ENCODE measurements at regions of chr10 and their contacts with region 1.

Region 1: DNA sequence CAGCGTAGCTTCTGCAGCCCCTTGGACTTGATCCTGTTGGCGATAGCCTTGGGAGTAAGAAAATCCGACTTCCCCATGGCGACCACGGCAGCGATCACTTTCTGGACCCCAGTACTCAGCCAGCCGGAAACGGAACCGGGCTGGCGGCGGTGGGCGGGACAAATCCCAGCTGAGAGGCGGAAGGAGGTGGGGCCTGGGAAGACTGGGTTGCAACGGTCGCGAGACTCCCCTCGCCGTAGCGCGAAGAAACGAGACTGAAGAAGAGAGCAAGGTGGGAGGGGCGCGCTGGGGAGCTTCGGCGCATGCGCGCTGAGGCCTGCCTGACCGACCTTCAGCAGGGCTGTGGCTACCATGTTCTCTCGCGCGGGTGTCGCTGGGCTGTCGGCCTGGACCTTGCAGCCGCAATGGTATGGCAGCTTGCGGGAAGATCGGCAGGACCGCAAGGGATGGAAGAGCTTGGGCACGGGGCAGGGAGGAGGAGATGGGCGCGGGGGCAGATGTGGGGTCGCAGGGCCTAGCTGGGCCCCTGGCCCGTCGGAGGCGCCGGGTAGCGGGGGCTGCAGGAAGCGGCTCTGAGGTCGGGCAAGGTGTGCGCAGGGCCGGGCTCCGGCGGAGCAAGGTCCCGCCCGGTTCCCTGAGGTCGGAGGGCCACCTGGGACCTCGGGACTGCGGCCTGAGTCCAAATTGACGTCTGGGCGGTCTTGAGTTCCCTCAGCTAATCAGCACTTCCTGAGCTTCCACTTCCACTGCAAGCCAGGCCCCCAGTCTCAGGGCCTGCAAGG is at the starts of genes ATP5F1C and KIN:
- DNase-seq: peak; percentile 93
- ATAC-seq: peak; percentile 97
- H3K4me3 Mint-ChIP-seq: no peak within 1 kb of the TSS
- H3K27ac Mint-ChIP-seq: no peak within 1 kb of the TSS
- H3K4me1 Mint-ChIP-seq: peaks cover 51% of the 10 kb centered on the region
- H3K27me3 Mint-ChIP-seq: no peaks in the 10 kb centered on the region
- CTCF ChIP-seq: no peak
- total RNA-seq, gene ATP5F1C: 177 and 182 TPM in 2 replicates
- total RNA-seq, gene KIN: 12.6 and 13.1 TPM in 2 replicates

Region 2: DNA sequence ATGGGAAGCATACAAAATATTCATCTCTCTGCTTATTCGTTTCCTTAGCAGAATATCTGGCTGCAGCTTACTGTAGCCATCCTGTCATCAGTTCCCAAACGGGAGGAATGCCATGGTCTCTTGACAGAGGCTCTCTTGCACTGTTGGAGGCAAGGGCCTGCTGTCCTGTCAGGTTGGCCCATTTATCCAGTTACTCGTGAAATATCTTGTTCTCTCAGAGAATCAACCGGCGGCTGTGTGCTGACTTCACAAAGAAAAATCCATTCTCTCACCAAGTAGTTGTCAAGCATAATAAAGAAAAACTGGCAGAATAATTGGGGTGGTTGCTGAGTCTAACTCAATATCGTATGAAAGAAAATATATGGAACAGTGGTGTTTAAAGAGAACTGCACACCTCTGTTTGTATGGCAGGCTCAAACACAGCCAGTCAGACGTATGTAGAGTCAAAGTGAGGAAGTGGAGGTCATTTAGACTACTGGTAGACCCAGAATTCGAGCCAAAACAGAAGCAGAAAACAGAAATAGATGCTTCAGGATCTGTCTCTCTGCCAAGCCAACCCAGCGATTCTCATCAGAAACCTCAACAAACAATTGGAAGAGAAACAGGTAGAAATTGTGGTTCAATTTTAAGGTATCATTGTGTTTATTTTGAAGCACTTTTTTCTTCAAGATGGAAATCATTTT is 858.8 kb before region 1 on chr10:
- CTCF ChIA-PET with region 1: no interaction called
- POLR2A ChIA-PET with region 1: no interaction called
- intact Hi-C with region 1: loop called (anchors 5 kb)
- DNase-seq: no peak
- ATAC-seq: no peak
- H3K4me3 Mint-ChIP-seq: no peak overlapping the region
- H3K27ac Mint-ChIP-seq: no peak overlapping the region
- H3K4me1 Mint-ChIP-seq: peaks cover 47% of the 10 kb centered on the region
- H3K27me3 Mint-ChIP-seq: no peaks in the 10 kb centered on the region
- CTCF ChIP-seq: no peak

Region 3: DNA sequence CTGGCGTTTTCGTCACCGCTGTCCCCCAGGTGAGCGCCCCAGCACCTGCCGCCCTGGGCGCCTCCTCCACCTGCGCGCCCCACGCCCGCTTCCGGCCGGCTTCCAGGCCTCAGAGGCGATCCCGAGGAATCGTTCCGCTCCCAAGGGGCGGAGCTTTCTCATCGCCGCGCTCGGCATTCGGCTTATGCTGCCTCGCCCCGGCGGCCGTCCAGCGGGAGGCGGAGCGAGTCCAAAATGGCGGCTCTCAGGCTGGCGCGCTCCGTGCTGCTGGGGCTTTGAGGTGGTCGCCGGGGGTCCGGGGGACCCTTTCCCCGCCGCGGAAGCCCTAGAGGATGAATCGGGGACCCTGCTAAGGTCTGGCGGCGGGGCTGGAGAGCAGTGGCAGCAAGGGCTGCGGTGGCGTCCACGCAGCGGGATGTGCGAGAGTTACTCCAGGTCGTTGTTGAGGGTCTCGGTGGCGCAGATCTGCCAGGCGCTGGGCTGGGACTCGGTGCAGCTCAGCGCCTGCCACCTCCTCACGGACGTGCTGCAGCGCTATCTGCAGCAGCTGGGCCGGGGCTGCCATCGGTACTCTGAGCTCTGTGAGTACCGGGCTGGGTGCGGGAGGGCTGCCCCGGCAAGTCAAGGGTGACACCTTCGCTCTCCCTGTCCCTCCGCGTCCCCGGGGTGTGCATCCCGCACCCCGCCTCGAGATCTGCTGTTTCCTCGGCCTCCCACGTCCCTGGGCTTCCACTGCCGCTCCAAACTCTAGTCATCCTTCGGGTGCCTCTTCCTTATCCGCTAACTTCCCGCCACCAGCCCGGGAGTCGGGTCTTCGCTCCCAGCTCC is 30.5 kb after region 1 on chr10 and contains the start of gene TAF3:
- CTCF ChIA-PET with region 1: no interaction called
- POLR2A ChIA-PET with region 1: interaction called, 108 read pairs
- intact Hi-C with region 1: loop called (anchors 1 kb)
- DNase-seq: peak; percentile 90
- ATAC-seq: peak; percentile 93
- H3K4me3 Mint-ChIP-seq: peak within 1 kb of the TSS; percentile 100
- H3K27ac Mint-ChIP-seq: peak within 1 kb of the TSS; percentile 87
- H3K4me1 Mint-ChIP-seq: peaks cover 27% of the 10 kb centered on the region
- H3K27me3 Mint-ChIP-seq: peaks cover 4% of the 10 kb centered on the region
- CTCF ChIP-seq: no peak
- total RNA-seq, gene TAF3: 12.4 and 12.6 TPM in 2 replicates